ENCODE measurements at regions of chr3 and their contacts with region 1.

Region 1: DNA sequence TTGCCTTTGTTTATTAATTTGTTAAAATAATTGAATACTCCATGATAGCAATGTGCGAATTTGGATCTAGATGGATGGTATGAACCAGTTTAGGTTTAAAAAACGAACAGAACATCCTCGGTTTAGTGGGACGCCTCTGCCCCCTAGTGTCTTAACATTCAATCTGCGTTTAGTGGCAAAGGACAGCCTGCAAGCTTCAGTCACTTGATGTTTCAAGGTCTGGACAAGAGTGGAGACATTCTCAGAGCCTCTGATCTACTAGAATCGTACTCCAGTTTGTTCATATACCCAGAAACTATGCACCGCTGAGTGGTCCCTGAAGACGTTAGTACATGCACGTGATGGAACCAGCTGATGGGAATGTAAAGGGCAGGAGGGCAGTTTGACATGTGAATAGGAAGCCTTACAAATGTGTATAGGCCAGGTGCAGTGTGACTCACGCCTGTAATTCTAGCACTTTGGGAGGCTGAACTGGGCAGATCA is 17.8 kb upstream of the ATP13A4 start:
- DNase-seq: peak in 4 of 5 donors; percentile 35 to 44 (median 42)
- H3K4me3 ChIP-seq: no peak overlapping the region
- H3K4me3 Mint-ChIP-seq: no peak overlapping the region
- H3K27ac ChIP-seq: no peak overlapping the region
- H3K27ac Mint-ChIP-seq: no peak overlapping the region
- H3K4me1 ChIP-seq: no peaks in the 10 kb centered on the region
- H3K4me1 Mint-ChIP-seq: peaks cover 0 to 2% (median 0%) of the 10 kb centered on the region in 4 donors
- H3K27me3 ChIP-seq: no peaks in the 10 kb centered on the region
- H3K27me3 Mint-ChIP-seq: peaks cover 0 to 4% of the 10 kb centered on the region in 2 donors

Region 2: DNA sequence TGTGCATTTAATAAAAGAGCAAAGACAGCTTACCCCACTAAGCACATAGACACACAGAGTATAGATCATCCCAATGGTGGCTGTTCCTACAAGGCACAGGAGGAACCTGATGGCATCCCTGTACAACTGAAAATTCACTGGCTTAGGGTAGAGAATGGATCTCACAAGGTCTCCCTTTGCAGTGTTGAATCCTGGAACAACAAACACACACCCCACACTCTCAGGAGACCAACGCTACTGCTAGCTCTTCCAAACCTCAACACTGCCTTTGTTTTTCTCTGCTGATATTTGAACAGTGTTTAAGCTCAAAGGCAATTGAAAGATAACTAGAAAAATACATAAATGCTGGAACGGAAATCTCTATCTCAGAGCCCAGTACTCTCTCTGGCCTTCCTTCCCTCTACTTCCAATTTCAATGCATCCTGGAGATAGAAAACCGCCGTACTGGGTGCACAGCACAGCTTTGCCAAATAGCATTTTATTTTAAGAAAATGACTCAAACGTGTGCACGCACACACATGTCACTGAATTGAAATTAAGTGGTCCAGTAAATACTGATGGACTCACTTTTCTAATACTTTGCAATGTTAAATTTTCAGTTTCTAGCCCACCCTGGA is 106.4 kb before region 1 on chr3:
- CTCF ChIA-PET with region 1: no interaction called
- POLR2A ChIA-PET with region 1: no interaction called
- intact Hi-C with region 1: loop called (anchors 1 kb)
- DNase-seq: no peak
- H3K4me3 ChIP-seq: no peak overlapping the region
- H3K4me3 Mint-ChIP-seq: no peak overlapping the region
- H3K27ac ChIP-seq: no peak overlapping the region
- H3K27ac Mint-ChIP-seq: no peak overlapping the region
- H3K4me1 ChIP-seq: no peaks in the 10 kb centered on the region
- H3K4me1 Mint-ChIP-seq: peaks cover 2 to 7% (median 4%) of the 10 kb centered on the region in 4 donors
- H3K27me3 ChIP-seq: no peaks in the 10 kb centered on the region
- H3K27me3 Mint-ChIP-seq: peaks cover 4 to 5% of the 10 kb centered on the region in 2 donors

Region 3: GRCh38 chr3:193548406-193548805 is 24.1 kb before region 1 on chr3:
- CTCF ChIA-PET with region 1: no interaction called
- POLR2A ChIA-PET with region 1: no interaction called
- intact Hi-C with region 1: no loop called
- DNase-seq: no peak
- H3K4me3 ChIP-seq: no peak overlapping the region
- H3K4me3 Mint-ChIP-seq: no peak overlapping the region
- H3K27ac ChIP-seq: no peak overlapping the region
- H3K27ac Mint-ChIP-seq: no peak overlapping the region
- H3K4me1 ChIP-seq: no peaks in the 10 kb centered on the region
- H3K4me1 Mint-ChIP-seq: no peaks in the 10 kb centered on the region
- H3K27me3 ChIP-seq: no peaks in the 10 kb centered on the region
- H3K27me3 Mint-ChIP-seq: peaks cover 0 to 2% of the 10 kb centered on the region in 2 donors